Cardiac septum (tissue), 1 donor: ENCODE measurements at regions of chr1 and their contacts with region 1.

Region 1: DNA sequence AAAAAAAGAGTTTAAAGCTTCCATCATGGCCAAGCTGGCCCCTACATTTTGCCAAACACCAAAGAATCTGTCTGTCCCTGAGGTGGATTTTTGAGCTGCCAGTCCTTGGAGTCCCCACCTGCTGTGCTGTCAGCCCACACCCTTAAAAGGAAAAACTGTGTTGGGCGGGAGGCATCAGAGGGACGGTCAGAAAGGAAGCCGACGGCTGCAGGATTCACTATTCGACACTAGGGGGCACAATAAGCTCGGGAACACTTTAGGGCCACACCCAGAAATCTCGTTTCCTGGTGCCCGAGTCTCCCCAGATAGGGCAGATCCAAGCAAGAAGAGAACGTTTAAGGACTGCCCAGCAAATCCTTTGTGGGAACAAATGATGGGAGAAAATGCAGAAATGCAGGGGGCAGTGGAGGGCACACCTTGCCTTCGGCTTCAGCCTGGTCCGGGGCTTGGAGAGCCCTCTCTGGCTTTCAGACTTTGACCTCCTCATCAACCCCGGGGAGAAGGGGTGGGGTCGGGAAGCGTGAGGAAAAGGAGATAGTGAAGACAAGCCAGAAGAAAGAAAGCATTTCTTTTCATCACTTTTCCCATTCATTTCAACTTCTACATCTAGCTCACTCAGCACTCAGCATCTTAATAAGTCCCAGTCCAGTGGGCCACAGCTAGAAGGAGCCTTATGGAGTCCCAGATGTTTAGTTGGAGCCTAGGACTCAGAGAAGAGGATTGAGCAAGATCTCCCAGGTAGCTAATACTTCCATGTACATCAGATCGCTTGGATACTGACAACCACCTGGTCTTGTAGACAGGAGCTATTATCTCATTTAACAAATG is 5.0 kb upstream of the CTTNBP2NL start:
- DNase-seq: peak; percentile 92

Region 2: DNA sequence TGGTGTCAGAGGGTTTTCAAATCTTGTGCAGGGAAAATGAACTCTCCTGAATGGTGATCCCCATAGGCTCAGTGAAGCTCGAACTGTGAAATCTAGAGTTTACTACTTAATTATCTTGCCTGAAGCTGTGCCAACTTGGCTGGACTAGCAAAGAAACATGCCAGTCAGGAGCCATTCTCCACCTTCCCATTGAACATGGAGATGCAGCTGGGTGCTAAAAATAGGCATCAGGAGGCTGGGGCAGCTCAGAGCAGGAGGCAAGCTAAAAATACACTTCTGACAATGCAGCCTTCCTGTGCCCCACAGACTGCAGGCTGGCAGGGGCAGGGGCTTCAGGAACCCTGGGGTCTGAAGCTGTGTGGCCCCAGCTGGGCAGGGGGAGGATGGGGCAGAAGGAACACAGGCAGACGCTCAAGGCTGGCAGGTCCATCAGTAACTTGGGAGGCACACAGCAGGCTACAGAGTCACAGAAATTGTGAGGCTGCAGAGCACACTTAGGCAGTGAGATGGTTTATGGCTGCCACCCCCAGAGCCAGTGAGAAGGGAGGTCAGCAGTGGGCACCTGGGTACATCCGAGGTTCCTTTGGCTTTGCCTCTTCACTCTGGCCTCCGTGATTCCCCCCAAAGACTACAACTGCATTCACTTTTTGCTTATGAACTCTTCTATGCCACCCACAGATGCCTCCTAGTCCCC is 246.1 kb before region 1 on chr1:
- intact Hi-C with region 1: no loop called
- DNase-seq: no peak

Region 3: GRCh38 chr1:112466078-112466660 is 75.2 kb after region 1 on chr1:
- intact Hi-C with region 1: loop called (anchors 1 kb)
- DNase-seq: peak; percentile 97

Region 4: DNA sequence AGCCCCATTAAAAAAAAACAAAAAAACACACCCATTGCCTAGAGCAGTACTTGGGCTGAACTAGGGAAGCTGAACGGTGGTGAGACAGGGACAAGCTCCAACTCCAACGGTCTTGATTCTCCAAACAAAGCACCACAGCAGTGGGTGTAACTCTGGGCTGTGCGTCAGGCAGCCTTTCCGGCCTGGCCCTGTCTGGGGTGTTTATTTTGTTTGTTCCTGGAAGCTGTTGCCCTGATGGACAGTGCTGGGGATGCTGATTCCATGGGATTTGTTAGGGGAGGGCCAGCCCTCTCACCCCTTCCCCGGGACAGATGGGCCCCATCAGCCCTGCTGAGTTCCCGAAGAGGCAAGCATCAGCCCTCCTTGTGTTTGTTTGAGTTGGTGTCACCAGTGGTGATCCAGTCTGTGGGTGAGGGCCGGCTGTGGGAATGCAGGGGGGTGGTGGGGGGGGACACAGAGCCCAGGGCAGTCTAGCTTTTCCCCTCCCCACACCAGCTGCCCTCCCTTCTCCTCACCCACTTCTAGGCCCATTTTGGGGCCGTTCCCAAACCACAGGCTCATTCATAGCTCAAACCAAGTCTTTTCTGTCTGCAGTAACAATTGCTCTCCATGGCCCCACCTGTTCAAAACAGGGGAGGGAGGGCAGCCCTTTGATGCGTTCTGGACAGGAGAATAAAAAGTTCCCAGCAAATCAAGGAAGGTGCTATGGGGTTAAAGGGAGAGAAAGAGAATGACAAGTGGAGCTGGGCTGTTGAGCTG is 122.3 kb after region 1 on chr1:
- intact Hi-C with region 1: loop called (anchors 5 kb)
- DNase-seq: no peak

Region 5: DNA sequence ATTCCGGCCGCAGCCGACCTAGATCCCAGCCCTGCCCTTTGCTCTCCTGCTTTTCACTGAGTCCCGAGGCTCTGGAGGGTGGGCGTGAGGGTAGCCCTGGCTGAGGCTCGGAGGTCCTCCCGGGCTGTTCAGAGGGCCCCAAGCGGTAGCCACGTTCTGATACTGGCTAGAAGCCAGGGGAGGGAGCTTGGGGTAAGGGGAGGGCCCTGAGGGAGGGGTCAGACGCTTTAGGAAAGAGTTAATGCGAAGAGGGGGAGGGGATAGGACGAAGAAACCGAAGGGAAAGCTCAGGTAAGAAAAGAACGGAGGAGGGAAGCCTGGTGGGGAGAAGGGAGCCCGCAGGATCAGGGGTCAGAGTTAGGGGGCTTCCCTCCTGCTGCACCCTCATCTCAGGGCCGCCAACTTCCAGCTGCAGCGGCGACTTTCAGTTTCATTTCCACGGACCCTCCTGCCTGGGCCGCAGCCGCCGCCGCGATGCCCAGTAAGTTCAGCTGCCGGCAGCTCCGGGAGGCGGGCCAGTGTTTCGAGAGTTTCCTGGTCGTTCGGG is 283.5 kb after region 1 on chr1 and contains the start of gene MOV10:
- intact Hi-C with region 1: loop called (anchors 10 kb)
- DNase-seq: peak; percentile 87
- total RNA-seq, gene MOV10: 18.3 TPM

Region 6: GRCh38 chr1:112803906-112804762 is 413.1 kb after region 1 on chr1:
- intact Hi-C with region 1: loop called (anchors 10 kb)
- DNase-seq: no peak